ENCODE measurements at regions of chr1 and their contacts with region 1.

Region 1: GRCh38 chr1:234309598-234310459 is 63.4 kb upstream of the COA6 start:
- DNase-seq: peak; percentile 86
- ATAC-seq: peak; percentile 93
- H3K4me3 ChIP-seq: peak overlapping the region; percentile 30
- H3K27ac ChIP-seq: peak overlapping the region; percentile 67 to 81
- H3K4me1 ChIP-seq: peaks cover 24% of the 10 kb centered on the region
- CTCF ChIP-seq: peak; percentile 94
- EP300 ChIP-seq: no peak; a peak in 1 of 5 replicates
- POLR2A ChIP-seq: no peak
- RAD21 ChIP-seq: peak; percentile 72 to 76

Region 2: GRCh38 chr1:234135501-234135900 is 174.3 kb before region 1 on chr1:
- CTCF ChIA-PET with region 1: interaction called, 18 read pairs
- POLR2A ChIA-PET with region 1: interaction called, 5 read pairs
- DNase-seq: no peak
- ATAC-seq: no peak
- H3K4me3 ChIP-seq: no peak overlapping the region
- H3K27ac ChIP-seq: peak overlapping the region in 1 of 2 experiments; percentile 88; a peak in 4 of 6 replicates
- H3K4me1 ChIP-seq: peaks cover 37% of the 10 kb centered on the region
- CTCF ChIP-seq: no peak
- EP300 ChIP-seq: no peak
- POLR2A ChIP-seq: no peak
- RAD21 ChIP-seq: no peak

Region 3: GRCh38 chr1:234163267-234163919 is 146.4 kb before region 1 on chr1:
- CTCF ChIA-PET with region 1: interaction called, 30 read pairs
- POLR2A ChIA-PET with region 1: no interaction called
- DNase-seq: no peak
- ATAC-seq: peak in 1 of 2 experiments; percentile 45; a peak in 3 of 6 replicates
- H3K4me3 ChIP-seq: no peak overlapping the region
- H3K27ac ChIP-seq: peak overlapping the region in 1 of 2 experiments; percentile 62; a peak in 3 of 6 replicates
- H3K4me1 ChIP-seq: peaks cover 26% of the 10 kb centered on the region
- CTCF ChIP-seq: no peak
- EP300 ChIP-seq: no peak
- POLR2A ChIP-seq: no peak
- RAD21 ChIP-seq: no peak

Region 4: GRCh38 chr1:234212764-234213657 is 96.8 kb before region 1 on chr1:
- CTCF ChIA-PET with region 1: interaction called, 26 read pairs
- POLR2A ChIA-PET with region 1: no interaction called
- DNase-seq: peak; percentile 42 to 53
- ATAC-seq: peak in 1 of 2 experiments; percentile 67; a peak in 3 of 6 replicates
- H3K4me3 ChIP-seq: no peak overlapping the region
- H3K27ac ChIP-seq: peak overlapping the region in 1 of 2 experiments; percentile 25; a peak in 1 of 6 replicates
- H3K4me1 ChIP-seq: peaks cover 13% of the 10 kb centered on the region
- CTCF ChIP-seq: peak; percentile 35; the same call in 2 of the 3 replicates
- EP300 ChIP-seq: no peak
- POLR2A ChIP-seq: no peak
- RAD21 ChIP-seq: no peak

Region 5: GRCh38 chr1:234271243-234271606 is 38.6 kb before region 1 on chr1:
- CTCF ChIA-PET with region 1: interaction called, 16 read pairs
- POLR2A ChIA-PET with region 1: no interaction called
- DNase-seq: no peak
- ATAC-seq: no peak
- H3K4me3 ChIP-seq: no peak overlapping the region
- H3K27ac ChIP-seq: no peak overlapping the region
- H3K4me1 ChIP-seq: no peaks in the 10 kb centered on the region
- CTCF ChIP-seq: no peak
- EP300 ChIP-seq: no peak
- POLR2A ChIP-seq: no peak
- RAD21 ChIP-seq: no peak

Region 6: DNA sequence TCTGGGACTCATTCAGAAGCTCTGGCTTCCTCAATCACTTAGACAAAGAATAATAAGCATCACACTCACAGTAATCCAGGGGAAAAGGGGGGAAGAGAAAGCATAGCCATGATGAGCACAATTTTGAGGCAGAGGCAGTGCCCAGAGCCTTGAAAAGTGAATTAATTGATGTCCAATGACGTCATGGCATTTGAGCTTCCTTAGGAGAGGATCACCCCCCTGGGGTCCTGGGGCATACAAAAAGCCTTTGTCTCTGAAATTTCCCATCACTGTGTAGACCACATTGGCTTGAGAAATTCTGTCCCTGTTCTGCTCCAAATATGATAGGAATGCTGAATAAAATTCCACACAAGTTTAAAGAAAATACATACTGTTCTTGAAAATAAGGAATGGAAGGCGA is 20.9 kb before region 1 on chr1:
- CTCF ChIA-PET with region 1: interaction called, 20 read pairs
- POLR2A ChIA-PET with region 1: no interaction called
- DNase-seq: no peak
- ATAC-seq: no peak
- H3K4me3 ChIP-seq: no peak overlapping the region
- H3K27ac ChIP-seq: no peak overlapping the region
- H3K4me1 ChIP-seq: no peaks in the 10 kb centered on the region
- CTCF ChIP-seq: no peak
- EP300 ChIP-seq: no peak
- POLR2A ChIP-seq: no peak
- RAD21 ChIP-seq: no peak

Region 7: GRCh38 chr1:234373064-234373958 is 63.5 kb after region 1 on chr1 and contains the start of gene COA6:
- CTCF ChIA-PET with region 1: interaction called, 4 read pairs
- POLR2A ChIA-PET with region 1: interaction called, 10 read pairs
- DNase-seq: peak; percentile 89 to 98
- ATAC-seq: peak; percentile 97 to 98
- H3K4me3 ChIP-seq: peak within 1 kb of the TSS; percentile 66
- H3K27ac ChIP-seq: peak within 1 kb of the TSS; percentile 95 to 99
- H3K4me1 ChIP-seq: peaks cover 38% of the 10 kb centered on the region
- CTCF ChIP-seq: no peak
- EP300 ChIP-seq: no peak
- POLR2A ChIP-seq: peak; percentile 91
- RAD21 ChIP-seq: peak; percentile 15 to 23; a peak in 1 of 5 replicates
- polyA plus RNA-seq, gene COA6: 56.9 and 102 TPM in 2 replicates

Measured in A549 (cell line).